ENCODE measurements at regions of chr1 and their contacts with region 1.

Region 1: GRCh38 chr1:3069491-3070303 is 694 bp downstream of the PRDM16 start:
- DNase-seq: peak; percentile 78

Region 2: GRCh38 chr1:3219005-3219790 is 149.5 kb after region 1 on chr1:
- intact Hi-C with region 1: loop called in 1 of 2 experiments (anchors 10 kb)
- DNase-seq: no peak

Region 3: DNA sequence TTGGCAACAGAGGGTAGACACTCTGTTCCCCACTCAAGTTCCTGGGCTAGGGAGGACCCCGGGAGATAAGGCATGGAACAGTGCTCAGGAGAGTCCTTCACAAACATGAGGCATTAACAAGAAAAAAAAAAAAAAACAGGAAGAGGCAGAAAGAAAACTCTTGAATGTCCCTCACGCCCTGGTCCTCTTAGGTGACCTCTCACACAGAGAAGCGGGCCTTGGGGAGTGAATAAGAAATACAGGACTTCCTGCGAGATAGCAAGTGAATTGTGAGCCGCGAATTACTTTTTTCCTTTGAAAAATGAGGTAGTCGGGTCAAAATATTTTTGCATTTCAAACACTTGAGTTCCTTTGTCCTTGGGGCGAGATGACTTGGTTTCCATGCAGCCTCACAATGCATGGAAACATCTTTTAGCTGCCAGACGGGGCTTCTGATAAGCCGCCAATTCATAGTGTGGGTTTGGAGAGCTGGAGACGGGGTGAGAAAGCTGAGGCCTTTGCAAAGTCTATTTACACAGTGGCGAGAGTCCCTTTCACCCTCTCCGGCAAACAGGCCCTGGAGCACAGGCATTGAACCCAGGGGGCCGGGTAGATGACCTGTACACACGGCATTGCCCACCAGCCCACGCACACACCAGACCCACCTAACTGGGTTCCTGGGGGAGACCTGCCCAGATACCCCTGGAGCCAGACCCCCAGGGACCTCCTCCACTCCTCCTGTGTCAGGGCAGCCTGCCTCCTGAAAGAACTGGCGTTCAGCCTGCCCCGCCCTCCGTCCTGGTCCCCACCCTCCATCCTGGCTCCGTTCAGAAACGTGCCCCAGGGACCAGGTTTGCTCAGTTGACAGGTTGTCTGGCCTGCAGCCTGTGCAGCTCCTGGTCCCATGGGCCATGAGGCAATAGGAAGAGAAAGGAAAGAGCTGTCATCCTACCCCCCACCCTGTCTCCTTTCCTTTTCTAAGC is 191.6 kb after region 1 on chr1:
- intact Hi-C with region 1: no loop called
- DNase-seq: no peak

Region 4: DNA sequence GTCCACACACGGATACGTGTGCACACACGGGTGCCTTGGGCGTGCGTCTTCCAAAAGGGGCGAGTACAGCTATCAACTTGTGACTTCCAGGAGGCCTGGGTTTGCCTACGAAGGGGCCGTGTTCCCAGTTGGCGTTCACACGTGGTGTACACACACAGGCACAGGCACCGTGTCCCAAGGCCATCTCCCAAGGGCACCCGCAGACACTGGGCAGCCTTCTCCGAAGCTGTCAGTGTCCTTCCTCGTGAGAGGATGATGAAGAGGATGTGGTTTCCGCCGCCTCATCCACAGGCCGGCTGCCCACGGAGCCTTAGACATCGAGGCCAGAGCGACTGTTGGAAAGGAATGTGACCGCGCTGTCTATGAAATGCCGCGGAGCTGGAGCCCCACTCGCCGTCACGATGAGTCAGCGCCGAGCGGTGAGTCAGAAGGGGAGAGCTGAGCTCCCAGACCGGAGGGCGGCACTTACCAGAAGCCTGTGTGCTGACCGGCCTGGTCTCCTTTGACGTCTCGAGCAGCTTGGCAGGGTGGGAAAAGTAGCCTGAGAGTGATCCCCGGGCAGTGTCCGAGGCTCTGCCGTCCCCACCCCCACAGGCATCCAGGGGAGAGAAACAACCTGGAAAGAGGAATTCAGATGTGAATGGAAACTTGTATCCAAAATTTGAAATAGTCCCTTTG is 243.3 kb after region 1 on chr1:
- intact Hi-C with region 1: loop called in 1 of 2 experiments (anchors 5 kb)
- DNase-seq: peak; percentile 99